WTC11 (cell line): ENCODE measurements at regions of chr14 and their contacts with region 1.

Region 1: GRCh38 chr14:36070031-36070719 is 106.3 kb downstream of the PTCSC3 start:
- DNase-seq: peak; percentile 79
- ATAC-seq: peak; percentile 84
- H3K4me3 Mint-ChIP-seq: no peak overlapping the region
- H3K27ac Mint-ChIP-seq: 0 out of 2 replicates have a peak overlapping the region, but pooled peaks have one; percentile 74
- H3K4me1 Mint-ChIP-seq: peaks cover 5% of the 10 kb centered on the region
- H3K27me3 Mint-ChIP-seq: no peaks in the 10 kb centered on the region
- CTCF ChIP-seq: peak; percentile 39

Region 2: GRCh38 chr14:35883677-35884293 is 186.4 kb before region 1 on chr14:
- CTCF ChIA-PET with region 1: interaction called, 23 read pairs
- POLR2A ChIA-PET with region 1: no interaction called
- DNase-seq: no peak
- ATAC-seq: peak; percentile 50; the same call in 1 of the 2 replicates
- H3K4me3 Mint-ChIP-seq: no peak overlapping the region
- H3K27ac Mint-ChIP-seq: no peak overlapping the region
- H3K4me1 Mint-ChIP-seq: peaks cover 4% of the 10 kb centered on the region; the same call in 1 of the 2 replicates
- H3K27me3 Mint-ChIP-seq: no peaks in the 10 kb centered on the region; the same call in 1 of the 2 replicates
- CTCF ChIP-seq: peak; percentile 37

Region 3: DNA sequence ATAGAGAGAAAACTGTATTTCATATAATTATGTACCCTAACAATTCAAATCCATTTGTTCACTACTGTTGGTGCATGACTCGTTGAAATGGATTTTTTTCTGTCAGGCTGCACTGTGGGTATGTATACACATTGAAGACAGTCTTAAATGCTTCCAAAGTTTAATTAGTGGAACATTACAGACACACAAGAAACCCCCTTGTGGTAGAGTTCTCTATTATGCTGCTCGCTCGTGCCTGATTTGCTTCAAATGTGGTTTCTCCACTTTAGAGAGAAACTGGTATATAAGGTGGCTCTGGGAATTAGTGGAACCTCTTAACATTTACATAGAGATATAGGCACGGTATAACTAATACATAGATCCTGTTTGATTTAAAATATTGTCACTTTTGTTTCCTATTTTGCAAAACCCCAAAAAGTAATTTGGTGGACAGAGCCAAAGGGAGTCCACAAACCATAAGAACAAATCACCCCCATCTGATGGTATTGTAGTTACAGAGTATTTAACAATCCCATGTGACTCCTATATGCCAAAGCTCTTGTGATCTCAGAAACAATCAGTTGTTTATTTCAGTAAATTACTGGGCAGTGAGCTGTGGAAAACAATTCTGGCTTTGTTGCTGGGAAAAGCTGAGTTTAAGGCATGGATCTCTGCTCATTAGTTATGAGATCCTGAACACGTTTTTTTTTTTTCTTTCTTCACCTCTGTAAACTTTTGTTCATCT is 84.5 kb before region 1 on chr14:
- CTCF ChIA-PET with region 1: interaction called, 11 read pairs
- POLR2A ChIA-PET with region 1: no interaction called
- DNase-seq: no peak
- ATAC-seq: peak; percentile 65
- H3K4me3 Mint-ChIP-seq: no peak overlapping the region
- H3K27ac Mint-ChIP-seq: no peak overlapping the region
- H3K4me1 Mint-ChIP-seq: no peaks in the 10 kb centered on the region
- H3K27me3 Mint-ChIP-seq: no peaks in the 10 kb centered on the region
- CTCF ChIP-seq: peak; percentile 24; the same call in 1 of the 2 replicates

Region 4: GRCh38 chr14:36057452-36058141 is 12.6 kb before region 1 on chr14:
- CTCF ChIA-PET with region 1: interaction called, 18 read pairs
- POLR2A ChIA-PET with region 1: no interaction called
- DNase-seq: no peak
- ATAC-seq: no peak
- H3K4me3 Mint-ChIP-seq: no peak overlapping the region
- H3K27ac Mint-ChIP-seq: no peak overlapping the region
- H3K4me1 Mint-ChIP-seq: peaks cover 3% of the 10 kb centered on the region; the same call in 1 of the 2 replicates
- H3K27me3 Mint-ChIP-seq: no peaks in the 10 kb centered on the region; the same call in 1 of the 2 replicates
- CTCF ChIP-seq: no peak

Region 5: GRCh38 chr14:36105401-36105800 is 35.2 kb after region 1 on chr14:
- CTCF ChIA-PET with region 1: interaction called, 21 read pairs
- POLR2A ChIA-PET with region 1: no interaction called
- DNase-seq: peak; percentile 21
- ATAC-seq: peak; percentile 92
- H3K4me3 Mint-ChIP-seq: no peak overlapping the region
- H3K27ac Mint-ChIP-seq: no peak overlapping the region
- H3K4me1 Mint-ChIP-seq: no peaks in the 10 kb centered on the region
- H3K27me3 Mint-ChIP-seq: no peaks in the 10 kb centered on the region
- CTCF ChIP-seq: no peak

Region 6: DNA sequence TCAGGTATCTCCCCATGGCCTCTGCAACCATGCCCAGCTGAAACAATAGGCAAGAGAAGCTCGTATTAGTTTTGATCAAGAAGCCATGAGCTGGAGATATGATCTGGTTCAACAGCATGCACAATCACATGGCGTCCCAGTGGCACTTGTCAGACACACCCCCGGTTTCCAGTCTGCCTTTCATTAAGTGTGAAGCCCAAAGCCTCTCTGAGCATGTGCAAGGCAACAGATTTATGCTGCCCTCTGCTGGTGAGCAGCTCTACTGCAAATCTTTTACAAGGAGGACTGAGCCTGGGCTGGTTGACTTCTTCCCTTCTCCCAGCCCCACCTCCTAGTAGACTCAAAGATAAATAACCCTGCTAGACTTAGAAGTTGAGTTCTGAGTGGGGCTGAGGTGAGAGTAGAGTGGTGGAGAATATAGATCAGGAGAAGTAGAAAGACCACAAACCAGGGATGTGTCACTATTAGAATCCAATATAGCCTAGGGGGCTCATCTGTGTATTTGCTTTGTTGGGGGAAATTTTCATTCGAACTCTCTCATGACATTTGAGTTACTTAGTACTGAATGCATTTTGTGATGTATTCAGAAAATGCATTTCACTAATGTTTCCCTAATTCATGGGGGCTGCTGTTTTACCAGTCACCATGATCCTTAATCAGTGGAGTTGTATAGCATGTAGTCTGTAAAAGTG is 304.0 kb after region 1 on chr14:
- CTCF ChIA-PET with region 1: interaction called, 35 read pairs
- POLR2A ChIA-PET with region 1: no interaction called
- DNase-seq: peak; percentile 90
- ATAC-seq: peak; percentile 98
- H3K4me3 Mint-ChIP-seq: no peak overlapping the region
- H3K27ac Mint-ChIP-seq: no peak overlapping the region
- H3K4me1 Mint-ChIP-seq: no peaks in the 10 kb centered on the region
- H3K27me3 Mint-ChIP-seq: peaks cover 19% of the 10 kb centered on the region
- CTCF ChIP-seq: peak; percentile 86

Region 7: DNA sequence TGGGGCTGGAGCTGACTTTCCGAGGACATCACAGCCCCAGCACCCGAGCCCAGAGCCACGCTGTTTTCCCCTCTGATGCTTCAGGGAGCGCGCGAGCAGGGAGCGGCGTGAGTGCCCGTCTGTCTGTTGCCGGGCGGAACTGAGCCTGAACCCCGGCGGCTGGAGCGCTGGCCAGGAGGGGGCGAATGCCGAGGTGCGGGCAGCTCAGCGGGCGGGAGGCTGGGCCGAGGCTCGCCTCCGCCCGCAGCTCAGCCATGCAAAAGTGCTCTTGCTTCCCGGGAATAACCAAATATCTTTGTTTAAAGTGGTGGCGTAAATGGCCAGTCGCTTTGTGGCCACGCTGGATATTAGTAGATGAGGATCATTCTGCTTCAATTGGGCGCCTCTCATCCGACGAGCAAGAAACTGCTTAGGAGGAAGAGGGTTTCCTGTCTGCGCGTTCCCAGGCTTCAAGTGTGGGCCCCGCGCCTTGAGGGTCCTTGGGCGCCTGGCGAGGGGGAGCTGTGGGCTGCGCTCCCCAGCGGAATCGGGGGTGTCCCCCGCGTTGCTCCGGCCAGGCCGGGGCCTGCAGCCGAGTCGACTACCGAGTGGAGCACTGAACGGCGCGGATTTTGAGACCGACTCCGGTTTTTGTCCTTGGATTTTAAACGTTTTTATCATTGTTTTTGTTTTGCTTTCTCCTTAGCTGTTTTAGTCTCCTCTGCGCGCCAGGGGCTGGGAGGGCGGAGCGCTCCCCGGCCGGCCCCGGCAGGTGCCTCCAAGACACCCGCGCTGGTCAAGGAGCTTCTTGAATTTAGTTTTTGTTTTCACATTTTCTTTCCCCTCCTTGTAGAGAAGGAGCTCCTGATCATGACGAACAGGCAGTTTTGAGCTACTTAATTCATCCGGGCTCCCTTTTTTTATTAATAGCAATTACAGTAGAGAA is 450.7 kb after region 1 on chr14:
- CTCF ChIA-PET with region 1: interaction called, 73 read pairs
- POLR2A ChIA-PET with region 1: no interaction called
- DNase-seq: peak; percentile 73
- ATAC-seq: peak; percentile 7
- H3K4me3 Mint-ChIP-seq: peak overlapping the region; percentile 59
- H3K27ac Mint-ChIP-seq: no peak overlapping the region
- H3K4me1 Mint-ChIP-seq: peaks cover 34% of the 10 kb centered on the region
- H3K27me3 Mint-ChIP-seq: peaks cover 98% of the 10 kb centered on the region
- CTCF ChIP-seq: no peak